Vagina (tissue), 2 donors: ENCODE measurements at regions of chr14 and their contacts with region 1.

Region 1: GRCh38 chr14:99749142-99749541 is 44.1 kb upstream of the EML1 start:
- DNase-seq: no peak
- H3K4me3 ChIP-seq: no peak overlapping the region
- H3K27ac ChIP-seq: peak overlapping the region; percentile 89
- H3K4me1 ChIP-seq: peaks cover 72% of the 10 kb centered on the region
- H3K27me3 ChIP-seq: no peaks in the 10 kb centered on the region
- CTCF ChIP-seq: peak in 1 of 3 experiments; percentile 17
- POLR2A ChIP-seq: no peak

Region 2: GRCh38 chr14:99793213-99794150 is 44.3 kb after region 1 on chr14 and contains the start of gene EML1:
- intact Hi-C with region 1: loop called (anchors 5 kb)
- DNase-seq: no peak
- H3K4me3 ChIP-seq: peak within 1 kb of the TSS; percentile 55 to 77
- H3K27ac ChIP-seq: peak within 1 kb of the TSS; percentile 90
- H3K4me1 ChIP-seq: peaks cover 28% of the 10 kb centered on the region
- H3K27me3 ChIP-seq: no peaks in the 10 kb centered on the region
- CTCF ChIP-seq: no peak
- POLR2A ChIP-seq: no peak
- total RNA-seq, gene EML1: 32.7 TPM